ENCODE measurements at regions of chr7 and their contacts with region 1.

Region 1: GRCh38 chr7:148927123-148928045 is 43.3 kb upstream of the EZH2 start:
- DNase-seq: no peak
- ATAC-seq: no peak
- H3K4me3 ChIP-seq: no peak overlapping the region
- H3K27ac ChIP-seq: no peak overlapping the region
- H3K4me1 ChIP-seq: no peaks in the 10 kb centered on the region
- H3K27me3 ChIP-seq: no peaks in the 10 kb centered on the region
- CTCF ChIP-seq: no peak

Region 2: GRCh38 chr7:148912758-148913541 is 14.4 kb before region 1 on chr7:
- CTCF ChIA-PET with region 1: no interaction called
- POLR2A ChIA-PET with region 1: interaction called, 10 read pairs
- in situ Hi-C with region 1: no loop called
- intact Hi-C with region 1: no loop called
- DNase-seq: peak; percentile 20
- ATAC-seq: no peak
- H3K4me3 ChIP-seq: no peak overlapping the region
- H3K27ac ChIP-seq: no peak overlapping the region
- H3K4me1 ChIP-seq: peaks cover 22% of the 10 kb centered on the region
- H3K27me3 ChIP-seq: no peaks in the 10 kb centered on the region
- CTCF ChIP-seq: no peak